ENCODE measurements at regions of chr2 and their contacts with region 1.

Region 1: DNA sequence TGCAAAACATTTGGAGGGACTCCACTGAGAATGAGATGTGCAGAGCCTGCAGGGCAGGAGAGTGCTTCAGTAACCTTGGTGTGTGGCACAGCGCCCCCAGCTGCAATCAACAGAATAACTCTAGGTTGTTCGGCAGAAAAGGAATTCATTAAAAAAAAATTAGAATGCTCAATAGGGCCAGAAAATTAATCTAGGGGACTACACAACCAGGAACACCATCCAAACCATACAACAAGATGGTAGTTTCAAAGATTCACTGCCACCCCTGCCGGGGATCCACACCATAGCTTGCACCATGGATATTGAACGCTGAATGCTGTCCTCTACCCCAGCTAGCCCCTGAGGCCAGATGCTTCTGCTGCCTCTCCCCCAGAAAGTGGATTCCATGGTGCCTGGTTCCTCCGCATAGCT is 50.1 kb downstream of the THUMPD2 start:
- H3K4me3 ChIP-seq: no peak overlapping the region
- H3K27ac ChIP-seq: no peak overlapping the region
- H3K4me1 ChIP-seq: peaks cover 4% of the 10 kb centered on the region; the same call in 1 of the 2 replicates
- CTCF ChIP-seq: 0 out of 2 replicates have a peak, but pooled peaks have one; percentile 18

Region 2: GRCh38 chr2:39379643-39380524 is 349.1 kb before region 1 on chr2:
- CTCF ChIA-PET with region 1: interaction called, 28 read pairs
- POLR2A ChIA-PET with region 1: no interaction called
- H3K4me3 ChIP-seq: no peak overlapping the region
- H3K27ac ChIP-seq: no peak overlapping the region
- H3K4me1 ChIP-seq: peaks cover 5% of the 10 kb centered on the region; the same call in 1 of the 2 replicates
- CTCF ChIP-seq: peak; percentile 44; the same call in 1 of the 2 replicates

Region 3: GRCh38 chr2:39513641-39514094 is 215.3 kb before region 1 on chr2:
- CTCF ChIA-PET with region 1: interaction called, 38 read pairs
- POLR2A ChIA-PET with region 1: no interaction called
- H3K4me3 ChIP-seq: no peak overlapping the region
- H3K27ac ChIP-seq: no peak overlapping the region
- H3K4me1 ChIP-seq: peaks cover 3% of the 10 kb centered on the region; the same call in 1 of the 2 replicates
- CTCF ChIP-seq: peak; percentile 51; the same call in 1 of the 2 replicates

Region 4: GRCh38 chr2:39593439-39594393 is 135.2 kb before region 1 on chr2:
- CTCF ChIA-PET with region 1: interaction called, 41 read pairs
- POLR2A ChIA-PET with region 1: no interaction called
- H3K4me3 ChIP-seq: no peak overlapping the region
- H3K27ac ChIP-seq: no peak overlapping the region
- H3K4me1 ChIP-seq: no peaks in the 10 kb centered on the region
- CTCF ChIP-seq: peak; percentile 62

Region 5: DNA sequence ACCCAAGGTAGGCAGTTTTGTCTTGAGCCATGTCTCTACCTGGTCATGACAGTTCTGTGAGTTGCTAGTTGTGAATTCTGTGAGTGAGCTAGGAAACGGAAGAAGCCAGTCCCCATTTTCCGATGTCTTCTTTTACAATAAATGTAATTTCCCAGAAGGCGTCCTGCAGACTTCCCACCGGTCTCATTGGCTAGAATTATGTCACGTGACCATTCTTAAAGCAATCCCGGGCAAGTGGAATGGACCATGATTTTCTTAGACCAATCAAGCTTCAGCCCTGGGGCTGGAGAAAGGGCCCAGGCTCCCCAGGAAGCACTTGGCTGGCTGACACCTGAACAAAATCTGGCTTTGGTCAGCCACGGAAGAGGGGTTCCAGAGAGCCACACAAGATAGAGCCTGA is 52.6 kb before region 1 on chr2:
- CTCF ChIA-PET with region 1: no interaction called
- POLR2A ChIA-PET with region 1: no interaction called
- H3K4me3 ChIP-seq: no peak overlapping the region
- H3K27ac ChIP-seq: no peak overlapping the region
- H3K4me1 ChIP-seq: no peaks in the 10 kb centered on the region
- CTCF ChIP-seq: no peak

Region 6: GRCh38 chr2:39696838-39697237 is 32.1 kb before region 1 on chr2:
- CTCF ChIA-PET with region 1: interaction called, 27 read pairs
- POLR2A ChIA-PET with region 1: no interaction called
- H3K4me3 ChIP-seq: no peak overlapping the region
- H3K27ac ChIP-seq: no peak overlapping the region
- H3K4me1 ChIP-seq: peaks cover 3% of the 10 kb centered on the region; the same call in 1 of the 2 replicates
- CTCF ChIP-seq: no peak

Region 7: GRCh38 chr2:39743269-39743776 is 14.4 kb after region 1 on chr2:
- CTCF ChIA-PET with region 1: interaction called, 34 read pairs
- POLR2A ChIA-PET with region 1: no interaction called
- H3K4me3 ChIP-seq: no peak overlapping the region
- H3K27ac ChIP-seq: no peak overlapping the region
- H3K4me1 ChIP-seq: no peaks in the 10 kb centered on the region
- CTCF ChIP-seq: no peak

Region 8: DNA sequence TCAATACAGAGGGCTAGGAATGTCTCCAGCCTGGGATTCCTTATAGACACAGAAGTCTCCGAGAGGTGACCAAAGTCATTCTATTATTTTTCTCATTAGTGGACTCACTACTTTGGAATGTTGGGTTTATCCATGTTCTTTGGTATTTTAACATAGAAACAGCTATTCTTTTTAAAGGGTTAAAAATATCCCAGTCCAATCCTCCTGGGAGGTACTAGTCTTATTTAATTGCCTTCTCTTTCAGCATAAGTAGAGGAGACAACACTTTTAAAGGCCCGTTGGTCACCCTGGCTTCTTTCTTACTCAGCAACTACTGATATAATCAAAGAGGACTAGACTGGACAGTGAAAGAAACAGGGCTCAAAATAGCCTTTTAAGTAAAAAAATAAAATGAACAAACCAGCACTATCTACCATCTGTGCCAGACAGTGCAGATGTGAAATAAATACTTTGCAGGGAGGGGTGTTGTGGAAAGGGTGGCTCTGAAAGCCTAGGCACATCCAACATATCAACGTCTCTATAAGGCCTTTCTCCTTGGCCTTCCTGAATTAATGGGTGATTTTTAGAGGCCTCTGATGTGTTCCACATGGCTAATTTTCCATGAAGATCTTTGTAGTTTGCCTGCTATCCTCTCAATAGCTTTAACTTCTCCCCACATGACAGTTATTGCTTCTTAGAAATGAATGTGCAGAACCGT is 384.5 kb after region 1 on chr2:
- CTCF ChIA-PET with region 1: no interaction called
- POLR2A ChIA-PET with region 1: no interaction called
- H3K4me3 ChIP-seq: no peak overlapping the region
- H3K27ac ChIP-seq: no peak overlapping the region
- H3K4me1 ChIP-seq: no peaks in the 10 kb centered on the region
- CTCF ChIP-seq: no peak

Measured in HEK293 (cell line).